Left ventricle myocardium inferior (tissue), 1 donor: ENCODE measurements at regions of chr5 and their contacts with region 1.

Region 1: DNA sequence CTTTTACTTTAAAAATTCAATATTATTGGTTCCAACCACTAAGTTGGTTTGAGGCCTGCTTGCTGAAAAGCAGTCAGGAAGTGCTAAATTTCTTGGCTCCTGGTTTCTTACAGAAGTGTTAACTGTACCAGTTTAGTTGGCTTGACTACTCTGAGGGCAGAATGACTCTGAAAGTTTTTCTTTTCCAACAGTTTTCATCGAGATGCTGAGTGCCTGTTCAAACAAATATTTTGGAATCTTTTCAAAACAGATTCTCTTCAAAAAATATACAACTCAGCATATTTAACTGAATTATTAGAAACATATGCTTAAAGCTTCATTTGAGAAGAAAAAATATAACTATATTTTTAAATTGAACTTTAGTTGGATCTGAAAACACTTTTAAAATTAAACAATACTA is 37.0 kb downstream of the SLC38A9 start:
- DNase-seq: no peak
- H3K4me3 ChIP-seq: no peak overlapping the region
- H3K27ac ChIP-seq: peak overlapping the region; percentile 0
- H3K4me1 ChIP-seq: peaks cover 29% of the 10 kb centered on the region
- H3K27me3 ChIP-seq: no peaks in the 10 kb centered on the region
- CTCF ChIP-seq: no peak

Region 2: GRCh38 chr5:55081541-55081940 is 593.6 kb before region 1 on chr5:
- intact Hi-C with region 1: no loop called
- DNase-seq: no peak
- H3K4me3 ChIP-seq: no peak overlapping the region
- H3K27ac ChIP-seq: no peak overlapping the region
- H3K4me1 ChIP-seq: no peaks in the 10 kb centered on the region
- H3K27me3 ChIP-seq: no peaks in the 10 kb centered on the region
- CTCF ChIP-seq: no peak

Region 3: DNA sequence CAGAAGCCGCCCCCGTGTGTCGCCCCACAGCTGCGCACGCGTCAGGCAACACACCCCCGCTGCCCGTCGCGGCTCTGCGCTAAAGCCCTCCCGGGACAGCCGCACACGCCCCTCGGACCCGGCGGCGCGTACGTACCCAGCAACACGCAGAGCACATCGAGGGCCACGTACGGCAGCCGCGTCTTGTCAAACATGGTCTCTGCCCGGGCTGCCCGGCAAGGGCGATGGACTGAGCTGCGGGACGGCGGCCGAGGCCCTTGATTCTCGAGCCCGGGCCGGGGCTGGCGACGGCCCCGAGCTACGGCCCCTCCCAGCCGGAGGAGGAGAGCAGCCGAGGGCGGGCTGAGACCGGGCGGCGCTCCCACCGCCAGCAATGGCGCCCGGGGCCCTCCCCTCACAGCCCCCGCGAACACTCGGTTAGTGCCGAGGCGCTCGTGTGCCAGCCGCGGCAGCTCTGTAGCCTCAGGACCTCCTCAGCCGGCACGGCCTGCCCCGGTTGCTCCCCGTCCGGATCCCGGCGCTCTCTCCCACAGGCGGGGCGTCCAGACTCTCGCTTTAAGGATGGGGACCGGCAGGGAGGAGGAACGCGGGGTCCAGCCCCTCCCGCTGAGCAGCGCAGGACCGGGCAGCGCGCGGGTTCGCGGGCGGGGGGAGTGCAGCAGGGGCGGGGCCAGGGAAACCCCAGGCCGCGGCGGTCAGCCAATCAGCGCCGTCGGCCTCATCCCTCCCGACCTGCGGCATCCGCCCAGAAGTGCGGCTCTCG is 140.5 kb before region 1 on chr5 and contains the start of gene PLPP1:
- intact Hi-C with region 1: loop called (anchors 10 kb)
- DNase-seq: peak; percentile 92
- H3K4me3 ChIP-seq: peak within 1 kb of the TSS; percentile 94
- H3K27ac ChIP-seq: peak within 1 kb of the TSS; percentile 98
- H3K4me1 ChIP-seq: peaks cover 63% of the 10 kb centered on the region
- H3K27me3 ChIP-seq: no peaks in the 10 kb centered on the region
- CTCF ChIP-seq: no peak
- total RNA-seq, gene PLPP1: 72.6 TPM

Region 4: GRCh38 chr5:55601204-55601618 is 73.9 kb before region 1 on chr5:
- intact Hi-C with region 1: loop called (anchors 10 kb)
- DNase-seq: peak; percentile 80
- H3K4me3 ChIP-seq: peak overlapping the region; percentile 59
- H3K27ac ChIP-seq: peak overlapping the region; percentile 97
- H3K4me1 ChIP-seq: peaks cover 81% of the 10 kb centered on the region
- H3K27me3 ChIP-seq: no peaks in the 10 kb centered on the region
- CTCF ChIP-seq: no peak

Region 5: GRCh38 chr5:55645304-55645703 is 29.8 kb before region 1 on chr5:
- intact Hi-C with region 1: loop called (anchors 2 kb)
- DNase-seq: no peak
- H3K4me3 ChIP-seq: no peak overlapping the region
- H3K27ac ChIP-seq: no peak overlapping the region
- H3K4me1 ChIP-seq: no peaks in the 10 kb centered on the region
- H3K27me3 ChIP-seq: no peaks in the 10 kb centered on the region
- CTCF ChIP-seq: no peak

Region 6: DNA sequence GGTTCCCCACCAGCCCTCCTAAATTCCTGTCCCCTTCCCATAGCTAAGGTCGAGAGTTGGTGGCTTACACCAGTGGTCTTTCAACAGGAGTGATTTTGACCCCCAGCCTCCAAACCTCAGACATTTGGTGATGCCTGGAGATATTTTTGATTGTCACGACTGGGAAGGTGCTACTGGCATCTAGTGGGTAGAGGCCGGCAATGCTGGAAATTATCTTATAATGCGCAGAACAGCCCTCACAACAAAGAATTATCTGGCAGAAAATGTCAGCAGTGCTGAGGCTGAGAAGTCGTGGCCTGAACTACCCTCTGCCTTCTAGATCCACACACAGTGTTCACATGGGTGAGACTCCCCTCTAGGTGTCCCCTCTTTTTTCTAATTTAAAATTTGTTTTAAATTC is 245.7 kb after region 1 on chr5:
- intact Hi-C with region 1: no loop called
- DNase-seq: no peak
- H3K4me3 ChIP-seq: no peak overlapping the region
- H3K27ac ChIP-seq: no peak overlapping the region
- H3K4me1 ChIP-seq: peaks cover 6% of the 10 kb centered on the region
- H3K27me3 ChIP-seq: no peaks in the 10 kb centered on the region
- CTCF ChIP-seq: no peak

Region 7: DNA sequence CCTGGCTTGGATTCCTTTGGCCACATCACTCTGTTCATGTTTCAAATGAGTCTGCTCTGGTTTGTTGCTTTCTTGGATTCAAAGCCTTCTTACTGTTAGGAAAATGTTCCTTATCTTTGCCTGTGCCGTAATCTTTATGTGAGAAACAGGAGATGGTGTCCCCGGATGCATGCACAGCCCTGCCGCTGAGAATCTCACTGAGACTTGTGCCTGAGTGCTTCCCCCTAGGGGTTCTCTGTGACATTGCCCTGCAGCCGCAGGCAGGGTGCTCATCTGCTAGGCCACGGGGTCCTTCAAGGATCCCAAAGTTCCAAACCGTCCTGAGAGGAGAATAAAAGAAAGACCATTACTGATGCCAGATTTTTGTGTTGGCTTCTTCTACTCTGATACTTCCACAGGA is 639.4 kb after region 1 on chr5:
- intact Hi-C with region 1: no loop called
- DNase-seq: peak; percentile 17
- H3K4me3 ChIP-seq: no peak overlapping the region
- H3K27ac ChIP-seq: no peak overlapping the region
- H3K4me1 ChIP-seq: peaks cover 16% of the 10 kb centered on the region
- H3K27me3 ChIP-seq: no peaks in the 10 kb centered on the region
- CTCF ChIP-seq: peak; percentile 65